ENCODE measurements at regions of chr9 and their contacts with region 1.

Region 1: GRCh38 chr9:15552636-15553527 is at the start of gene CCDC171:
- DNase-seq: peak; percentile 93 to 96
- H3K4me3 ChIP-seq: peak within 1 kb of the TSS; percentile 70 to 73
- H3K27ac ChIP-seq: peak within 1 kb of the TSS; percentile 89 to 96
- H3K4me1 ChIP-seq: no peaks in the 10 kb centered on the region
- H3K27me3 ChIP-seq: no peaks in the 10 kb centered on the region
- CTCF ChIP-seq: peak in 2 of 4 experiments; percentile 1 to 16
- POLR2A ChIP-seq: peak; percentile 68 to 87
- total RNA-seq, gene CCDC171: 15.6 to 45.6 (median 26.4) TPM

Region 2: GRCh38 chr9:15499139-15499538 is 53.7 kb before region 1 on chr9:
- intact Hi-C with region 1: no loop called
- DNase-seq: no peak
- H3K4me3 ChIP-seq: no peak overlapping the region
- H3K27ac ChIP-seq: no peak overlapping the region
- H3K4me1 ChIP-seq: no peaks in the 10 kb centered on the region
- H3K27me3 ChIP-seq: no peaks in the 10 kb centered on the region
- CTCF ChIP-seq: no peak
- POLR2A ChIP-seq: no peak

Region 3: GRCh38 chr9:15510789-15511575 is 41.9 kb before region 1 on chr9 and contains the start of gene PSIP1:
- intact Hi-C with region 1: loop called (anchors 5 kb)
- DNase-seq: peak; percentile 72 to 80
- H3K4me3 ChIP-seq: peak within 1 kb of the TSS; percentile 90 to 96
- H3K27ac ChIP-seq: peak within 1 kb of the TSS; percentile 93 to 96
- H3K4me1 ChIP-seq: no peaks in the 10 kb centered on the region
- H3K27me3 ChIP-seq: no peaks in the 10 kb centered on the region
- CTCF ChIP-seq: peak in 2 of 4 experiments; percentile 21 to 54
- POLR2A ChIP-seq: peak; percentile 40 to 73
- total RNA-seq, gene PSIP1: 97.1 to 112 (median 102) TPM

Region 4: DNA sequence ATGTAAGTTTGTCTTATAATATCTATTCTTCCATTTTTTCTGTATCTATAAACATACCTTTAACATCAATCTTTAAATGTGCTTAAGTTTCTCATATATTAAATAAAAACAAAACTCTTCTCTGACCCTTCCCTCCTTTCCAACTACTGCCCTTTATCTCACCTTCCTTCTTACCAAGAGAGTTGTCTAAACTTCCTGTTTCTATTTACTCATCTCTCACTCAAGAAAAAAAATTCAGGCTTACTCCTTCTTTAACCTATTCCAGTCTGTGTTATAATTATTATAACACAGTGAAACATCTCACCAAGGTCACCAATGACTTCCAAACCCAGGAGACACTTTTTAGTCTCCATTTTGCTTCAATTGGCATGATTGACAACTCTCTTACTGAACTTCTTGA is 140.8 kb after region 1 on chr9:
- intact Hi-C with region 1: no loop called
- DNase-seq: no peak
- H3K4me3 ChIP-seq: no peak overlapping the region
- H3K27ac ChIP-seq: no peak overlapping the region
- H3K4me1 ChIP-seq: no peaks in the 10 kb centered on the region
- H3K27me3 ChIP-seq: no peaks in the 10 kb centered on the region
- CTCF ChIP-seq: no peak
- POLR2A ChIP-seq: no peak